ENCODE measurements at regions of chr12 and their contacts with region 1.

Region 1: DNA sequence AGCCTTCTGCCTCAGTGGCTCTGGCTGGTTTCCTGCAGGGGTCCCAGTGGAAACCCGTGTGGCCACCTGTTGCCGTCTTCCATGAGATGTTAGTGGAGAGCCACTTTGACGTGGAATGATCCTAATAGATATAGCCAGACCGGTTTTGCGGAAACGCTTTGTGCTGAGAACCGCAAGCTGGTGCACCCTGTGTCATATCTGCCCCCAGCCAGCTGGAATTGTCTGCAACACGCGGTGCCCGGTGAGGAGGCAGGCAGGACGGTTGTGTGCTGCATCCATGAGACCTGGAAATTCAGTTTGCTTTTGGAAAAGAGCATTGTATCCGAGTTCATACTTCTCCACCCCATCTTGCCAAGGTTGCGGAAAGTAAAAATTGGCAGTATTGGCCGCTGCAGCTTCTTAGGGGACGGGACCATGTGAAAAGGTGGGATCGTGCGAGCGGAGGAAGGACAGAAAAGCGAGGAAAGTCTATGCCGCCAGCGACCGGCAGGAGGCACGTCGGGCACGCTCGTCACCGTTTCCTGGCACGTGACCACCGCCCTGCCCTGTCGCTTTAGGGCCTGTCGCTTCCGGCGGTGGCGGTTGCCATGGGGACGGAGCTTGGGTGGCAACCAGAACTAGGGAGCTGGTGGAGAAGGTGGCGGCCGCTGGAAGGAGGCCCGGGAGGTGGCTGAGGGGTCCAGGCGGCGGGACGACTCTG is at the start of gene CFAP251:
- DNase-seq: peak; percentile 99
- H3K4me3 Mint-ChIP-seq: peak within 1 kb of the TSS; percentile 81
- H3K27ac Mint-ChIP-seq: peak within 1 kb of the TSS; percentile 92
- H3K4me1 Mint-ChIP-seq: peaks cover 16% of the 10 kb centered on the region
- H3K27me3 Mint-ChIP-seq: no peaks in the 10 kb centered on the region
- total RNA-seq, gene CFAP251: 0.85 and 1.1 TPM in 2 replicates

Region 2: GRCh38 chr12:122021822-122022526 is 103.8 kb after region 1 on chr12 and contains the start of gene BCL7A:
- intact Hi-C with region 1: loop called (anchors 5 kb)
- DNase-seq: peak; percentile 87
- H3K4me3 Mint-ChIP-seq: peak within 1 kb of the TSS; percentile 94
- H3K27ac Mint-ChIP-seq: peak within 1 kb of the TSS; percentile 88
- H3K4me1 Mint-ChIP-seq: peaks cover 13% of the 10 kb centered on the region
- H3K27me3 Mint-ChIP-seq: peaks cover 26% of the 10 kb centered on the region
- total RNA-seq, gene BCL7A: 9.3 and 10.7 TPM in 2 replicates

Region 3: DNA sequence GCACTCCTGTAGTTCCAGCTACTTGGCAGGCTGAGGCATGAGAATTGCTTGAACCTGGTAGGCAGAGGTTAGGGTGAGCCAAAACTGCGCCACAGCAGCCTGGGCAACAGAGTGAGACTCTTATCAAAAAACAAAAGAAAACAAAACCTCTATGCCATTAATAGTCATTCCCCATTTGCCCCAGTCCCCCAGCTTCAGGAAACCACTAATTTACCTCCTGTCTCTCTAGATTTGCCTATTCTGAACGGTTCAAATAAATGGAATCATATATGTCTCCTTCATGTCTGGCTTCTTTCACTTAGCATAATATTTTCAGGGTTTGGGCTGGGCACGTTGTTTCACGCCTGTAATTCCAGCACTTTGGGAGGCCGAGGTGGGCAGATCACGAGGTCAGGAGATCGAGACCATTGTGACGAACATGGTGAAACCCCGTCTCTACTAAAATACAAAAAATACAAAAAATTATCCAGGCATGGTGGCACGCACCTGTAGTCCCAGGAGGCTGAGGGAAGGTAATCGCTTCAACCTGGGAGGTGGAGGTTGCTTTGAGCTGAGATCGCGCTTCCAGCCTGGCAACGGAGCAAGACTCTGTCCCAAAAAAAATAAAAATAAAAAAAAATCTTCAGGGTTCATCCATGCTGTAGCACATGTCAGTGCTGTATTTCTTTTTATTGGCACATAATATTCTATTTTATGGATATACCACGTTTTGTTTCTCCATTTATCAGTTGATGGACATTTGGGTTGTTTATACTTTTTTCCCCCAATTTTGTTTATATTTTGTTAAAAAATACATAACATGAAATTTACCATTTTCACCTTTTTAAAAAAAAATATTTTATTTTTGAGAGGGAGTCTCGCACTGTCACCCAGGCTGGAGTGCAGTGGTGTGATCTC is 640.9 kb after region 1 on chr12:
- intact Hi-C with region 1: no loop called
- DNase-seq: no peak
- H3K4me3 Mint-ChIP-seq: no peak overlapping the region
- H3K27ac Mint-ChIP-seq: no peak overlapping the region
- H3K4me1 Mint-ChIP-seq: peaks cover 3% of the 10 kb centered on the region
- H3K27me3 Mint-ChIP-seq: no peaks in the 10 kb centered on the region

Measured in activated CD4-positive, alpha-beta T cell treated with anti-CD3 and anti-CD28 coated beads, Interleukin-2, amount 10 ng/mL, durations not matched to agents 24 days and 14 days (primary cell).